Left ventricle myocardium inferior (tissue), 1 donor: ENCODE measurements at regions of chr2 and their contacts with region 1.

Region 1: DNA sequence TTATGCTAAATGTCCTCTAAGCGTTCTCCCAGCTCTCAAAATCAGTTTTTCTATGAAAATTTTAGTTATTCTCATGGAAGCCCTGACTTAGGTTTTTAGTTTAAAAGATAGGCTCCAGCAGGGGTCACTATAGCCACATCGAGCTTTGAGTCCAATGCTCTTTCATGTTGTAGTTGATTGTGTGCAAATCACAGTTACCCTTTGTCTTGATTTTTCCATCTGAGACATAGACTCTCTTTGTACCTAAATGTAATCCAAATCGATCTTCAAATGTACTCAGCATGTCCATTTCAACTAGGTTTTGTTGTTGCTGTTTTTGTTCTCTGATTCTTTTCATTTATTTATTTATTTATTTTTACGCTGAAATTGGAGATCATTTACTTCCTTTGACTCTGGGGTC is 26.4 kb upstream of the MSTN start:
- DNase-seq: no peak
- H3K4me3 ChIP-seq: no peak overlapping the region
- H3K27ac ChIP-seq: no peak overlapping the region
- H3K4me1 ChIP-seq: no peaks in the 10 kb centered on the region
- H3K27me3 ChIP-seq: no peaks in the 10 kb centered on the region
- CTCF ChIP-seq: peak; percentile 82

Region 2: GRCh38 chr2:190277234-190278112 is 188.6 kb after region 1 on chr2:
- intact Hi-C with region 1: loop called (anchors 5 kb)
- DNase-seq: no peak
- H3K4me3 ChIP-seq: no peak overlapping the region
- H3K27ac ChIP-seq: no peak overlapping the region
- H3K4me1 ChIP-seq: no peaks in the 10 kb centered on the region
- H3K27me3 ChIP-seq: no peaks in the 10 kb centered on the region
- CTCF ChIP-seq: peak; percentile 65